Gastrocnemius medialis (tissue), 4 donors: ENCODE measurements at regions of chr2 and their contacts with region 1.

Region 1: GRCh38 chr2:38702413-38702812 is 36.5 kb downstream of the GALM start:
- DNase-seq: no peak
- ATAC-seq: no peak
- H3K4me3 ChIP-seq: no peak overlapping the region
- H3K27ac ChIP-seq: no peak overlapping the region
- H3K4me1 ChIP-seq: no peaks in the 10 kb centered on the region
- H3K27me3 ChIP-seq: no peaks in the 10 kb centered on the region
- CTCF ChIP-seq: no peak
- POLR2A ChIP-seq: no peak

Region 2: GRCh38 chr2:38643021-38643671 is 59.3 kb before region 1 on chr2:
- in situ Hi-C with region 1: no loop called
- intact Hi-C with region 1: no loop called
- DNase-seq: no peak
- ATAC-seq: no peak
- H3K4me3 ChIP-seq: no peak overlapping the region
- H3K27ac ChIP-seq: no peak overlapping the region
- H3K4me1 ChIP-seq: no peaks in the 10 kb centered on the region
- H3K27me3 ChIP-seq: no peaks in the 10 kb centered on the region
- CTCF ChIP-seq: no peak
- POLR2A ChIP-seq: no peak

Region 3: GRCh38 chr2:38690499-38691294 is 11.7 kb before region 1 on chr2:
- in situ Hi-C with region 1: no loop called
- intact Hi-C with region 1: loop called (anchors 1 kb)
- DNase-seq: no peak
- ATAC-seq: peak in 1 of 2 donors; percentile 71
- H3K4me3 ChIP-seq: no peak overlapping the region
- H3K27ac ChIP-seq: no peak overlapping the region
- H3K4me1 ChIP-seq: no peaks in the 10 kb centered on the region
- H3K27me3 ChIP-seq: no peaks in the 10 kb centered on the region
- CTCF ChIP-seq: no peak
- POLR2A ChIP-seq: no peak

Region 4: GRCh38 chr2:39719317-39719716 is 1016.9 kb after region 1 on chr2:
- in situ Hi-C with region 1: no loop called
- intact Hi-C with region 1: no loop called
- DNase-seq: peak in 1 of 2 donors; percentile 53
- ATAC-seq: peak in 1 of 2 donors; percentile 28
- H3K4me3 ChIP-seq: no peak overlapping the region
- H3K27ac ChIP-seq: no peak overlapping the region
- H3K4me1 ChIP-seq: peaks cover 20 to 22% of the 10 kb centered on the region in 2 donors
- H3K27me3 ChIP-seq: no peaks in the 10 kb centered on the region
- CTCF ChIP-seq: no peak
- POLR2A ChIP-seq: no peak